PC-9 (cell line): ENCODE measurements at regions of chr20 and their contacts with region 1.

Region 1: DNA sequence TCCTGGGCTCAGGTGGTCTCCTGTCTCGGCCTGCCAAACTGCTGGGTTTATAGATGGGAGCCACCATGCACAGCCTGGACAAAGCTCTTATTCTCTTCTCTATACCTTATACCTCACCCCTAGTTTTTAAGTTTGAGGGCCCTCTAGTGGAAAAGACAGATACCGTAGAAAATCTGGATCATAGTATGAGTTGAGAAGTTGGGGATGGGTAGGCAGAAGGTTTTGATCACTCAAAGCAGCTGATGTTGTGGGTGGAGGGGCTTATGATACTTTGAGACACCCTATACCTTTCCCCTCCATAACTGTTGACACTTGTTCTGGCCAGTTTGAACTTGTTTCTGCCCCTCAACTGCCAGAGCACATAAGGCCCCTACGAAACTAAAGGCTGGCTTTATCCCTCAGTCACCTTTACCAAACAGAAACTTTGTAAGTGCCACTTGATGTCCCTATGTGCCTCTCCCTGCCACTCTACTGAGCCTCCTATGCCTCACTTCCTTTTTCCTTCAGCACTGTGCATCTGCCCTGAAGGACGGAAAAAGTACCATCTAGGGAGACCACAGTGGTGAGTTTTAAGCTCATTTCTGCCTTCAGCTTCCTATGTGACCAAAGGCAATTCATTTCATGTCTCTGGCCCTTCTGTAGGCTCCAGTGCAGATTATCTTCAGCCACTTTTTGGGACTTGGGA is 28.6 kb downstream of the RALY start:
- DNase-seq: no peak
- H3K4me3 ChIP-seq: no peak overlapping the region
- H3K27ac ChIP-seq: no peak overlapping the region
- H3K4me1 ChIP-seq: no peaks in the 10 kb centered on the region
- H3K27me3 ChIP-seq: no peaks in the 10 kb centered on the region
- CTCF ChIP-seq: peak; percentile 66

Region 2: DNA sequence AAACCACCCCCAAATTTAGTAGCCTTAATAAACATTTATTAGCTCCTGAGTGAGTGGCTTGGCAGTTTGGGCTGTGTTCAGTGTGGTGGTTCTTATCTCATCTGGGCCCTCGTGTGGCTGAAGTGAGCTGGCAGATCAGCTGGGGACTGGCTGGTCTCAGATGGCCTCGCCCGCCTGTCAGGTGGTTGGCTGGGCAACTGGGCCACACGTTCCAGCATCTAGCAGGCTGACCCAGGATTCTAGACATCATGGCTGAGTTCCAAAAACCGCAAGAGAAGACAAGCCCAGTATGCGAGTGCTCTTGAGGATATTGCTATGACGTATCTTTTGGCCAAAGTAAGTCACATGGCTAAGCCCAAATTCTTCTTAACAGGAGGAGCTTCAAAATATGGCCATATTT is 60.8 kb after region 1 on chr20:
- CTCF ChIA-PET with region 1: no interaction called
- POLR2A ChIA-PET with region 1: interaction called, 25 read pairs
- intact Hi-C with region 1: no loop called
- DNase-seq: peak in 1 of 2 experiments; percentile 69
- H3K4me3 ChIP-seq: no peak overlapping the region
- H3K27ac ChIP-seq: no peak overlapping the region
- H3K4me1 ChIP-seq: no peaks in the 10 kb centered on the region
- H3K27me3 ChIP-seq: no peaks in the 10 kb centered on the region
- CTCF ChIP-seq: no peak